HCT116 (cell line): ENCODE measurements at regions of chr13 and their contacts with region 1.

Region 1: DNA sequence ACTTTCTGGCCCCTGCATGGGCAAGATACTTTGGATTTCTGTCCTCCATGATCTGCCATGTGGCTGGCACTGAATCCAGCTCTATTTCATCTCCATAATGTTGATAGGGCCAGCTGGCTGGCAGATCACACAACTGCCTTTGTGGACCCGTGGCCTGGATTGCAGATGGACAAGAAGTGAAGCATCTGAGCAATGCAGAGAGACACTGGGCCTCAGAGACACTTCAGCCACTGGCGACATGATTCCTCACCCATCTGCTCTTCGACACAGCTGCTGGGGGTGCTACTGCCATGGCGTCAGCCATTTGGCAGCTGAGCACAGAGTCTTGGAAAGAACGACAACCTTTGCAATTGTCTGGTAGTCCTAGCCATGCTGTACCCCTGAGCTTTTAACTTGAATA is 79.5 kb upstream of the MYO16 start:
- DNase-seq: no peak
- ATAC-seq: no peak
- H3K4me3 ChIP-seq: no peak overlapping the region
- H3K27ac ChIP-seq: no peak overlapping the region
- H3K4me1 ChIP-seq: no peaks in the 10 kb centered on the region
- H3K27me3 ChIP-seq: peaks cover 6% of the 10 kb centered on the region; the same call in 1 of the 2 replicates
- CTCF ChIP-seq: no peak
- POLR2A ChIP-seq: no peak
- RAD21 ChIP-seq: no peak

Region 2: DNA sequence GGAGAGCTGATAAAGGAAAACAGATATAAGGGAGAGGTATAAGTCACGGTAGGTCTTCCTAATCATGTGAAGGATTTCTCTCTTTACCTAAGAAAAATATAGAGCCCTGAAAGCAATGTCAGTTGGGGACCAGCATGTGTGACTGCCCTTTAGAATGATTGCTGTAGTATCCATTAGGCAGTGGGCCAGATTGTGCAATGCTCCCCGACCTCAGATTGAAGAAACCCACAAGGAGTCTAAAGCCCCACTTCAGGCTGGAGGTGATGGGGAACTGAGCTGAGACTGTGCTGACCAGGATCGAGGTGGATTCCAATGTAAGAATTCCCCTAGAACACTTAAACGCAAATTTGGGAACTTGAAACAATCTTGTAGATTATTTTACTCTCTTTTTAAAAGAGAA is 949.0 kb before region 1 on chr13:
- CTCF ChIA-PET with region 1: no interaction called
- POLR2A ChIA-PET with region 1: no interaction called
- RAD21 ChIA-PET with region 1: no interaction called
- intact Hi-C with region 1: loop called (anchors 5 kb)
- DNase-seq: no peak
- ATAC-seq: no peak
- H3K4me3 ChIP-seq: no peak overlapping the region
- H3K27ac ChIP-seq: no peak overlapping the region
- H3K4me1 ChIP-seq: no peaks in the 10 kb centered on the region
- H3K27me3 ChIP-seq: no peaks in the 10 kb centered on the region
- CTCF ChIP-seq: no peak
- POLR2A ChIP-seq: no peak
- RAD21 ChIP-seq: no peak

Region 3: DNA sequence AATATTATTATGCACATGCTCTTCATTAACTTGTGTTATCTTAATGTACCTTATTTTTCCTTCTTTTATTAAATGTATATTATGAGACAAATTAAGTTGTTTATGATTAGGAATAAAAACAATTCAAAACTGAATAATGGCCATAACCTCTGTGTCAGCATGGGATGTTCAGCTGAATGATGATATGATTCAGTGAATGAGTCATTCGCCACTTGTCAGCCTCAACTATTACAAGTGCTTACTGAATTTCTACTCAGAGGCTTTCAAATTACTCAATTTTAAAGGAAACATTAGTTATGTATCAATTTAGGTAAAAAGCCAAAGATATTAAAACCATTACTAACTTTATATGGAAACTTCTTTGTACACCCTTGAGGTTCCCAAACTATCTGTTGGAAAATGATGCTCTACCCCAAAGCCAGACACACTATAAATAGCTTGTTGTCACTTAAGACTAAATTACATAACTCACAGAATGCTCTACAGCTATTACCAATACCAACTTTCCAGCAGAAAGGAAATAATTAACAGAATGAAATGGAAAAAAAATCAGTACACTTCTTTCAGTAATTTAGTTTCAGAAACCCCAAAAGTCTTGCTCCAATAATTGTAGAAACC is 349.0 kb before region 1 on chr13:
- CTCF ChIA-PET with region 1: no interaction called
- POLR2A ChIA-PET with region 1: no interaction called
- RAD21 ChIA-PET with region 1: no interaction called
- intact Hi-C with region 1: no loop called
- DNase-seq: no peak
- ATAC-seq: no peak
- H3K4me3 ChIP-seq: no peak overlapping the region
- H3K27ac ChIP-seq: no peak overlapping the region
- H3K4me1 ChIP-seq: no peaks in the 10 kb centered on the region
- H3K27me3 ChIP-seq: no peaks in the 10 kb centered on the region; the same call in 1 of the 2 replicates
- CTCF ChIP-seq: no peak
- POLR2A ChIP-seq: no peak
- RAD21 ChIP-seq: no peak

Region 4: DNA sequence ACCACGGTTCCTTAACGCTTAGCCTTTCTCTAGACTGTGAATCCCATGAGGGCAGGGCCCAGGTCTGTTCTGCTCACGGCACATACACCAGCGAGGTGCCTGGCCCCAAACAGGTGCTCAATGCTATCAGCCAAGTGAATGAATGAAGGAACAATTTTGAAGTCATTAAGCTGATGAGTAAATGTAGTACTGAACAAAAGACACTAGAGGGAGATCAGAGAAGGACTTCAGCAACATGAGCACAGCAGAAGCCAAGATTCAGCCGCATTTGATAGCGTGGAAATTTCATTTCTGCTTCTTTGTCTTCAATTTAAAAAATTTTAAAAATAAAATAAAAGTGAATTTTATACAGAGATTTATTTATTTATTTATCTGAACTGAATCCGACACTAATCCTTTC is 59.4 kb after region 1 on chr13:
- CTCF ChIA-PET with region 1: no interaction called
- POLR2A ChIA-PET with region 1: no interaction called
- RAD21 ChIA-PET with region 1: no interaction called
- intact Hi-C with region 1: no loop called
- DNase-seq: peak; percentile 37
- ATAC-seq: peak; percentile 70
- H3K4me3 ChIP-seq: no peak overlapping the region
- H3K27ac ChIP-seq: no peak overlapping the region
- H3K4me1 ChIP-seq: no peaks in the 10 kb centered on the region
- H3K27me3 ChIP-seq: no peaks in the 10 kb centered on the region
- CTCF ChIP-seq: peak; percentile 36 to 50 (median 48); a peak in 5 of 6 replicates
- POLR2A ChIP-seq: no peak
- RAD21 ChIP-seq: peak; percentile 52